Heart right ventricle (tissue), 16 donors: ENCODE measurements at regions of chr6 and their contacts with region 1.

Region 1: GRCh38 chr6:12605888-12606345 is 110.7 kb upstream of the PHACTR1 start:
- DNase-seq: peak in 1 of 2 donors; percentile 59
- ATAC-seq: peak in 6 of 8 donors; percentile 62 to 81 (median 68)
- H3K4me3 ChIP-seq: no peak overlapping the region
- H3K27ac ChIP-seq: no peak overlapping the region
- H3K4me1 ChIP-seq: peaks cover 0 to 33% (median 12%) of the 10 kb centered on the region in 9 donors
- H3K27me3 ChIP-seq: no peaks in the 10 kb centered on the region
- CTCF ChIP-seq: peak; percentile 26 to 81 (median 74)

Region 2: DNA sequence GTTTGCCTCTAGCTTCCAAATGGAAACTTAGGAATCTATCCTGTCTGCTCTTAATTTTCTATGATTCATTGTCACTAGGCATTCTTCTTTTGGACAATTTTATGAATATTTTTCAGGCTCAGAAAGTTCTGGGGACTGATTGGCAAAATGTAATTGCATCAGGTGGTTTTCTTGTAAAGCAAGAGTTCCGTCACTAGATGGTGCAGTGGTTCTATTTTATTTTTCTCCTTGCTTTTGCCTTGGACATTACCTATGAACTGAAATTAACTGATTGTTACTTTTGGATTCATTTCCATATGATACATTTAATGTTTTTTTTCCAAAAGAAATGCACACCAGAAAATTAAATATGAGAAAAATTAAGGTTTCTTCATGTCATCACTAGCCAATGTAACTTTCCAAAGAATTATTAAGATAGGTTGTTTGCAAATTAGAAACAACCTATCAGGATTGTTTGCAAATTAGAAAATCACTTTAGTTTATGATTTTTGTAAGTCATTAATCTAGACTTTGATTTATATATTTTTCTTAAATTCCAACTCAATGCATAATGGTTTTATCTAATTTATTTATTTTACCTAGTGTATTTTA is 1020.4 kb before region 1 on chr6:
- intact Hi-C with region 1: loop called in 8 of 10 experiments (anchors 2 to 10 kb)
- DNase-seq: no peak
- ATAC-seq: peak in 1 of 8 donors; percentile 34
- H3K4me3 ChIP-seq: no peak overlapping the region
- H3K27ac ChIP-seq: no peak overlapping the region
- H3K4me1 ChIP-seq: peaks cover 0 to 13% (median 0%) of the 10 kb centered on the region in 9 donors
- H3K27me3 ChIP-seq: no peaks in the 10 kb centered on the region
- CTCF ChIP-seq: peak; percentile 20 to 83 (median 67)

Region 3: GRCh38 chr6:12150812-12151432 is 455.0 kb before region 1 on chr6:
- intact Hi-C with region 1: loop called in 2 of 10 experiments (anchors 10 kb)
- DNase-seq: no peak
- ATAC-seq: no peak
- H3K4me3 ChIP-seq: no peak overlapping the region
- H3K27ac ChIP-seq: no peak overlapping the region
- H3K4me1 ChIP-seq: no peaks in the 10 kb centered on the region
- H3K27me3 ChIP-seq: no peaks in the 10 kb centered on the region
- CTCF ChIP-seq: peak in 7 of 9 donors; percentile 24 to 50 (median 38)

Region 4: DNA sequence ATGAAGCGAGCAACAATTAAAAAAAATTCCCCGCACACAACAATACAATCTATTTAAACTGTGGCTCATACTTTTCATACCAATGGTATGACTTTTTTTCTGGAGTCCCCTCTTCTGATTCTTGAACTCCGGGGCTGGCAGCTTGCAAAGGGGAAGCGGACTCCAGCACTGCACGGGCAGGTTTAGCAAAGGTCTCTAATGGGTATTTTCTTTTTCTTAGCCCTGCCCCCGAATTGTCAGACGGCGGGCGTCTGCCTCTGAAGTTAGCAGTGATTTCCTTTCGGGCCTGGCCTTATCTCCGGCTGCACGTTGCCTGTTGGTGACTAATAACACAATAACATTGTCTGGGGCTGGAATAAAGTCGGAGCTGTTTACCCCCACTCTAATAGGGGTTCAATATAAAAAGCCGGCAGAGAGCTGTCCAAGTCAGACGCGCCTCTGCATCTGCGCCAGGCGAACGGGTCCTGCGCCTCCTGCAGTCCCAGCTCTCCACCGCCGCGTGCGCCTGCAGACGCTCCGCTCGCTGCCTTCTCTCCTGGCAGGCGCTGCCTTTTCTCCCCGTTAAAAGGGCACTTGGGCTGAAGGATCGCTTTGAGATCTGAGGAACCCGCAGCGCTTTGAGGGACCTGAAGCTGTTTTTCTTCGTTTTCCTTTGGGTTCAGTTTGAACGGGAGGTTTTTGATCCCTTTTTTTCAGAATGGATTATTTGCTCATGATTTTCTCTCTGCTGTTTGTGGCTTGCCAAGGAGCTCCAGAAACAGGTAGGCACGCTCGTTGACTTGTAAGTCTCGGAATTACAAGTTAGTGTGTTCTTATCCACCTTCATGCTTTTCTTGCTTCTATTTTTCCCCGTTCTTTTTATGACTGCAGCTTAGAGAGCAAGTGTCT is 315.7 kb before region 1 on chr6 and contains the start of gene EDN1:
- intact Hi-C with region 1: loop called (anchors 2 to 5 kb)
- DNase-seq: peak; percentile 68 to 72
- ATAC-seq: peak; percentile 79 to 94 (median 90)
- H3K4me3 ChIP-seq: peak within 1 kb of the TSS; percentile 29 to 62 (median 54)
- H3K27ac ChIP-seq: peak within 1 kb of the TSS in 9 of 10 donors; percentile 6 to 75 (median 52)
- H3K4me1 ChIP-seq: peaks cover 0 to 34% (median 15%) of the 10 kb centered on the region in 9 donors
- H3K27me3 ChIP-seq: peaks cover 0 to 38% (median 15%) of the 10 kb centered on the region in 7 donors
- CTCF ChIP-seq: peak; percentile 10 to 65 (median 55)
- total RNA-seq, gene EDN1: 0.36 to 6.3 (median 3.3) TPM

Region 5: GRCh38 chr6:12309070-12309469 is 296.8 kb before region 1 on chr6:
- intact Hi-C with region 1: loop called in 1 of 10 experiments (anchors 5 kb)
- DNase-seq: no peak
- ATAC-seq: no peak
- H3K4me3 ChIP-seq: no peak overlapping the region
- H3K27ac ChIP-seq: no peak overlapping the region
- H3K4me1 ChIP-seq: no peaks in the 10 kb centered on the region
- H3K27me3 ChIP-seq: no peaks in the 10 kb centered on the region
- CTCF ChIP-seq: no peak

Region 6: DNA sequence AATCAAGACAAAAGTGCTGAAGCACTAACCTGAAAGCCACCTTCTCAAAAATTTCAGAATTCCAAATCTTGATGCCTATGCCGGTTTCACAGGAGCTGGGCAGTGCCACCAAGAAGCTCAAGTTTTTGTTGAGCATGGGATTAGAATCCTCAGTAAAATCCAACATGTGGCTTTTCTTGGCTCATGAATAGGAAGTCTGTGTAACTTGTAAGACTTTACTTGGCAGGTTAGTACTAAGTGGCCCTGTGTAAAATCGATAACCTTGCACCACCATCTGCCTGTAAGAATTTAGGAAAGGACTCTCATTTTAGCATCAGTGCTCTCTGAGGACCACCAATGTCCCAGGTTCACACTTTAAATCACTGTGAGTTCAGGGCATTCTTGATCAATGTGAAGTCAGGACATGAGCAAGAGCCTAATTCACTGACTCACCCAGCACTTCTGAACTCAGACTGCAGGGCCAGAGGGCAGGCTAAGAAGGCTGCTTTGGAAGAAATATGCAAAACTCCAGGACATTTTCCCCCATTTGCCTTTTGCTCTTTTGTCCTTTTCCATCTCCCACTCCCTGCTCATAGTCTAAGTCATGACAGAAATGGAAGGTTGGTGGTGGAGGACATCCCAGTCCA is 202.6 kb before region 1 on chr6:
- intact Hi-C with region 1: loop called in 5 of 10 experiments (anchors 5 to 10 kb)
- DNase-seq: no peak
- ATAC-seq: peak in 3 of 8 donors; percentile 33 to 48 (median 42)
- H3K4me3 ChIP-seq: no peak overlapping the region
- H3K27ac ChIP-seq: peak overlapping the region in 2 of 10 donors; percentile 7 to 55
- H3K4me1 ChIP-seq: peaks cover 0 to 48% (median 5%) of the 10 kb centered on the region in 9 donors
- H3K27me3 ChIP-seq: no peaks in the 10 kb centered on the region
- CTCF ChIP-seq: no peak